ENCODE measurements at regions of chr1 and their contacts with region 1.

Region 1: GRCh38 chr1:167207940-167208623 is 12.6 kb upstream of the POU2F1 start:
- DNase-seq: no peak
- ATAC-seq: peak; percentile 33; the same call in 1 of the 2 replicates
- H3K4me3 Mint-ChIP-seq: no peak overlapping the region
- H3K27ac Mint-ChIP-seq: no peak overlapping the region
- H3K4me1 Mint-ChIP-seq: peaks cover 18% of the 10 kb centered on the region
- H3K27me3 Mint-ChIP-seq: no peaks in the 10 kb centered on the region
- CTCF ChIP-seq: no peak

Region 2: GRCh38 chr1:167066333-167067122 is 141.6 kb before region 1 on chr1:
- CTCF ChIA-PET with region 1: interaction called, 10 read pairs
- POLR2A ChIA-PET with region 1: no interaction called
- DNase-seq: peak; percentile 91
- ATAC-seq: peak; percentile 94
- H3K4me3 Mint-ChIP-seq: peak overlapping the region; percentile 55
- H3K27ac Mint-ChIP-seq: 0 out of 2 replicates have a peak overlapping the region, but pooled peaks have one; percentile 84
- H3K4me1 Mint-ChIP-seq: peaks cover 9% of the 10 kb centered on the region
- H3K27me3 Mint-ChIP-seq: no peaks in the 10 kb centered on the region; the same call in 1 of the 2 replicates
- CTCF ChIP-seq: peak; percentile 97

Measured in WTC11 (cell line).